ENCODE measurements at regions of chr12 and their contacts with region 1.

Region 1: GRCh38 chr12:19410211-19410610 is 29.1 kb upstream of the AEBP2 start:
- DNase-seq: no peak
- H3K4me3 ChIP-seq: no peak overlapping the region
- H3K27ac ChIP-seq: no peak overlapping the region
- H3K4me1 ChIP-seq: peaks cover 2% of the 10 kb centered on the region
- H3K27me3 ChIP-seq: no peaks in the 10 kb centered on the region
- CTCF ChIP-seq: no peak
- EP300 ChIP-seq: no peak
- POLR2A ChIP-seq: no peak

Region 2: GRCh38 chr12:19458733-19459132 is 48.5 kb after region 1 on chr12:
- intact Hi-C with region 1: loop called in 1 of 4 experiments (anchors 2 kb)
- DNase-seq: no peak
- H3K4me3 ChIP-seq: no peak overlapping the region
- H3K27ac ChIP-seq: no peak overlapping the region
- H3K4me1 ChIP-seq: peaks cover 10% of the 10 kb centered on the region
- H3K27me3 ChIP-seq: no peaks in the 10 kb centered on the region
- CTCF ChIP-seq: no peak
- EP300 ChIP-seq: no peak
- POLR2A ChIP-seq: no peak

Region 3: GRCh38 chr12:20852649-20853048 is 1442.4 kb after region 1 on chr12:
- intact Hi-C with region 1: no loop called
- DNase-seq: no peak
- H3K4me3 ChIP-seq: no peak overlapping the region
- H3K27ac ChIP-seq: no peak overlapping the region
- H3K4me1 ChIP-seq: no peaks in the 10 kb centered on the region
- H3K27me3 ChIP-seq: no peaks in the 10 kb centered on the region
- CTCF ChIP-seq: no peak
- EP300 ChIP-seq: no peak
- POLR2A ChIP-seq: no peak